Ovary (tissue), 10 donors: ENCODE measurements at regions of chr10 and their contacts with region 1.

Region 1: DNA sequence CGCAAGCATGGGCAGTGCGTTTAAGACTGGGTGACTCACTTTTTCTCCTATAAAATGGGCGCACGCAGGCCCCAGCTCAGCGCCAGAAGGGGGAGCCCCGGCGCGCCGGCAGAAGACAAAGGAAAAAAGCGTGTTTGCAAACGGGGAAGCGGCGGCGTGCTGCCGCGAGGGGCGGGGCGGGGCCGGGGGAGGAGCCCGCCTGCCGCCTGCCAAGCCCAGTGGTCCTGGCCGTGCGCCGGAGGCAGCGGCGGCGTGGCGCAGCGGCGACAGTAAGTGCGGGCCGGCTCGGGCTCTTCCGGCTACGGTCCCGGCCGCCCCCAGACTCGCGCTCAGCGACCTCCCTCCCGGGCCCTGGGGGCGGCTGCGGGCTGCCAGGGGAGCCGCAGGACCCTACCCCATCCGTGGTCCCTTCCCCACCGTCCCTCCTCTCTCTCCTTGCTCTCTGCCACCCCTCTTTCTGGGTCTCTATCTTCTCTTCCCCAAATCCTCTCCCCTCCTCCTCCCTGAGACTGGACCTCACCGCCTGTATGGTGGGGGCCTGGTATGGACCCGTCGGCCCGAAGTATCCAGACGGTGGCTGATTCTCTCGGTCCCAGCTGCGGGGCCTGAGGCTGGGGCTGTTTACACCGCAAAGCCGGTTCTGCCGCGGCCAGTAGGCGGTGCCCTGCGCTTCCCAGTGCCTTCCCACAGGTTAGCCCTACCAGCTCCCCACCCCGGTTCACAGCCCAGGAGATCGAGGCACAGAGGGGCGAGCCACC is at the start of gene SLC29A3:
- DNase-seq: peak; percentile 80 to 88 (median 84)
- H3K4me3 ChIP-seq: peak within 1 kb of the TSS; percentile 76
- H3K27ac ChIP-seq: peak within 1 kb of the TSS; percentile 83 to 91
- H3K4me1 ChIP-seq: peaks cover 10% of the 10 kb centered on the region
- H3K27me3 ChIP-seq: no peaks in the 10 kb centered on the region
- CTCF ChIP-seq: peak; percentile 52 to 84 (median 73)
- EP300 ChIP-seq: no peak
- POLR2A ChIP-seq: peak; percentile 74
- total RNA-seq, gene SLC29A3: 10.1 to 18.3 (median 15.5) TPM

Region 2: GRCh38 chr10:71371750-71372166 is 52.5 kb after region 1 on chr10:
- intact Hi-C with region 1: loop called in 2 of 4 experiments (anchors 2 to 10 kb)
- DNase-seq: no peak
- H3K4me3 ChIP-seq: no peak overlapping the region
- H3K27ac ChIP-seq: no peak overlapping the region
- H3K4me1 ChIP-seq: peaks cover under 1% of the 10 kb centered on the region
- H3K27me3 ChIP-seq: no peaks in the 10 kb centered on the region
- CTCF ChIP-seq: no peak
- EP300 ChIP-seq: no peak
- POLR2A ChIP-seq: no peak

Region 3: DNA sequence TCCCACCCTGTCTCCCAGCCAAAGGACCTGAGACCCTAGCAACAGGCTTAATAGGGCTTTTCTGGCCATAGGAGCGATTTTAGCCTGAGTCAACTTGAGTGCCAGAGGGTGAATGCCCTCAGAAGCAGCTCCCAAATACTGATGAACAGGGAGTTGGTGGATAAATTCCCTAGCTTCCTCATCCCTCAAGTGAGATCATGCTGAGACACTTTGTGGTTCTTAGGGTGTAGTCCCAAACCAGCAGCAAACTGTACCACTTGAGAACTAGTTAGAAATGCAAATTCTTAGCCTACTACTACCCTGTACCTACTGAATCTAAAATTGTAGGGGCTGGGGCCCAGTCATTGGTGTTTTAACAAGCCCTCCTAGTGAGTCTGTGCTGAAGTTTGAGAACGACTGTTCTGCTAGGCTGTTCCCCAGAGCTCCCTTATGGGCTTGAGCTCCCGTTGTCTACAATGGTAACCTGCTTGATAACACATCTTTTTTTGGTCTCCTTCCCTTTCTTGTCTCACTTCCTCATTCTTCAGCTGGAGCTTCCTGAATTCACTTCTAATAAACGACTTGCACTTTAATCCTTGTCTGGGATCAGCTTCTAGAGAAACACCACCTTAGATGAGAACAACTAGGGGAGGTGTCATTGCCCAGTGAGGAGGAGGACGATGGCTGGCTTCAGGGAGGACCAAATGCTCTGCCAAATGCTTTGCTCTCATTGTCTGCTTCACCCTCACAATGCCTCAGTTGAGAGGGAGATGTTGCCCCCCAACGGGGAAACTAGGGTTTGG is 59.3 kb after region 1 on chr10:
- intact Hi-C with region 1: loop called in 2 of 4 experiments (anchors 2 to 10 kb)
- DNase-seq: no peak
- H3K4me3 ChIP-seq: no peak overlapping the region
- H3K27ac ChIP-seq: peak overlapping the region in 1 of 2 donors; percentile 93
- H3K4me1 ChIP-seq: peaks cover 4% of the 10 kb centered on the region
- H3K27me3 ChIP-seq: no peaks in the 10 kb centered on the region
- CTCF ChIP-seq: no peak
- EP300 ChIP-seq: no peak
- POLR2A ChIP-seq: no peak

Region 4: DNA sequence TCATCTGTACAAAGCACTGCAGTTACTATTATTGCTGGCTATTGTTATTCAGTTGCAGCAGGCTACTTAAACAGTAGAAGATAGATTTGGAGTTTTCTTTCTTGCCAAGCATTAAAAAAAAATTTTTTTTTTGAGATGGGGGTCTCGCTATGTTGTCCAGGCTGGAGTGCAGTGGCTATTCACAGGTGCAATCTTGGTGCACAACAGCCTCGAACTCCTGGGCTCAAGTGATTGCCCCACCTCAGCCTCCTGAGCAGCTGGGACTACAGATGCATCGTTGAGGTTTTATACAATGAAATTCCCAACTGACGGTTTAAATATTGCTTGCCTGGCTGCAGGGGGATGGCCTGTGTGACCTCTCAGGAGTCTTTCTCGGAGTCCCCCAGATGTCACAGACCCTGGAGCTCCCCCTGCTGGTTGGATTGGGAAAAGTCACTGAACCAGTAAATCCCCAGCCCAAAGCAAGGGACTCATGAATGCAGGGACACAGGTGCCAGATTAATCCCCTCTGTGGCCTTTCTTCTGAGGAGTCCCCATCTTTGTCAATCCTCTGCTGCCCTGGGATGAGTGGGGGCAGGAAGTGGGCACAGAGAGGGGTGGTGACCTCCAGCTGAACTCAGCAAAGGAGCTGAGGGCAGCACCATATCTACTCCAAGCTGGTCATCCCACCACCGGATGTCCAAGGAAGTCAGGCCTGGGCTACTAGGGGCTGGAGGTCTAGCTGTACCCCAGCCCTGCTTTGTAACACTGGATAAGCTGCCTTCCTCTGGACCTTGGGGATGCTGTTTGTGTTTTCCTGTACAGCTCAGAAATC is 250.8 kb after region 1 on chr10:
- intact Hi-C with region 1: loop called in 3 of 4 experiments (anchors 5 to 10 kb)
- DNase-seq: peak; percentile 76 to 87 (median 80)
- H3K4me3 ChIP-seq: no peak overlapping the region
- H3K27ac ChIP-seq: no peak overlapping the region
- H3K4me1 ChIP-seq: no peaks in the 10 kb centered on the region
- H3K27me3 ChIP-seq: no peaks in the 10 kb centered on the region
- CTCF ChIP-seq: peak; percentile 85 to 95 (median 90)
- EP300 ChIP-seq: no peak
- POLR2A ChIP-seq: no peak

Region 5: DNA sequence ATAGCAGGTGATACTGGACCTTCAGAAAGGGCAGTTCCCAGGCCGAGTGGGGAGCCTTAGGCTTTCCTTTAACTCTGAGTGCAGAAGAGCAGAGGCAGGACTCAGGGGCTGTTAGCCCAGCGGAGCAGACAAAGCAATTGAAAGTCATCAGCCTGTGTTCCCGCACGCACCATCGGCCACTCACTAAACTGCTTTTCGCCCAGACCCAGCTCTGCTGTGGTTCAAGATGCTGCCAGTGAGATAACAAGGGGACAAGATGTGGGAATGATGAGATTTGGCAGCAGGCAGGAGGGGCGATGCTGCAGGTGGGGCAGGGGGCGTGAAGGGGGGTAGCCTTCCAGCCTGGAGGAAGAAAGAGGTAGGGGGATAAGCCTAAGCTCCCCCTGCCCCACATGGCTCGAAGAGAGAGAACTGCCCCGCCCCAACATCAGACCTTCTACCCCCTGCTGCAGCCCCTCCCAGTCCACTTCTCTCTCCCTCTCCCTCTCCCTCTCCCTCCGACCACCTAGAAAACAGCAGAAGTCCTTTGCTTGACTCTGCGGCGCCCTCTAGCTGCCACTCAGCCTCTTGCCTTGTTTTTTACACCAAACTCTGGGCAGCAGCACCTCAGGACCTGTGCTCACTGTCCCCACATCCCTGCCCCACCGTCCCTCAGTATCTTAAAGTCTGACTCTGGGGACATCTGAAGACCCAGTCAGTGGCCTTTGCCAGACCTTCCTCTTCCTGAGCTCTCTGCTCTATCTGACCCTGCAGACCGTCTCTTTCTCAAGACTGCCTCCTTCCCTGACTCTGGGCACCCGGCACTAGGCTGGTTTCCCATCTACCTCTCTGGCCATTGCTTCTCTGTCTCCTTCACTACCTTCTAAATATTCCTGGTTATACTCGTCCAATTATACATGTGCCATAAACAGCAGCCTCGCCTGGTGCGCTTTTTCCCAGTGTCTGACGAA is 289.9 kb after region 1 on chr10:
- intact Hi-C with region 1: loop called in 3 of 4 experiments (anchors 5 to 10 kb)
- DNase-seq: peak; percentile 84 to 92 (median 91)
- H3K4me3 ChIP-seq: no peak overlapping the region
- H3K27ac ChIP-seq: no peak overlapping the region
- H3K4me1 ChIP-seq: no peaks in the 10 kb centered on the region
- H3K27me3 ChIP-seq: no peaks in the 10 kb centered on the region
- CTCF ChIP-seq: peak; percentile 65 to 74 (median 70)
- EP300 ChIP-seq: no peak
- POLR2A ChIP-seq: no peak

Region 6: GRCh38 chr10:71708301-71708703 is 389.1 kb after region 1 on chr10:
- intact Hi-C with region 1: loop called in 2 of 4 experiments (anchors 5 to 10 kb)
- DNase-seq: peak; percentile 48 to 83 (median 74)
- H3K4me3 ChIP-seq: no peak overlapping the region
- H3K27ac ChIP-seq: no peak overlapping the region
- H3K4me1 ChIP-seq: peaks cover 6% of the 10 kb centered on the region
- H3K27me3 ChIP-seq: no peaks in the 10 kb centered on the region
- CTCF ChIP-seq: peak; percentile 65 to 87 (median 67)
- EP300 ChIP-seq: no peak
- POLR2A ChIP-seq: no peak

Region 7: DNA sequence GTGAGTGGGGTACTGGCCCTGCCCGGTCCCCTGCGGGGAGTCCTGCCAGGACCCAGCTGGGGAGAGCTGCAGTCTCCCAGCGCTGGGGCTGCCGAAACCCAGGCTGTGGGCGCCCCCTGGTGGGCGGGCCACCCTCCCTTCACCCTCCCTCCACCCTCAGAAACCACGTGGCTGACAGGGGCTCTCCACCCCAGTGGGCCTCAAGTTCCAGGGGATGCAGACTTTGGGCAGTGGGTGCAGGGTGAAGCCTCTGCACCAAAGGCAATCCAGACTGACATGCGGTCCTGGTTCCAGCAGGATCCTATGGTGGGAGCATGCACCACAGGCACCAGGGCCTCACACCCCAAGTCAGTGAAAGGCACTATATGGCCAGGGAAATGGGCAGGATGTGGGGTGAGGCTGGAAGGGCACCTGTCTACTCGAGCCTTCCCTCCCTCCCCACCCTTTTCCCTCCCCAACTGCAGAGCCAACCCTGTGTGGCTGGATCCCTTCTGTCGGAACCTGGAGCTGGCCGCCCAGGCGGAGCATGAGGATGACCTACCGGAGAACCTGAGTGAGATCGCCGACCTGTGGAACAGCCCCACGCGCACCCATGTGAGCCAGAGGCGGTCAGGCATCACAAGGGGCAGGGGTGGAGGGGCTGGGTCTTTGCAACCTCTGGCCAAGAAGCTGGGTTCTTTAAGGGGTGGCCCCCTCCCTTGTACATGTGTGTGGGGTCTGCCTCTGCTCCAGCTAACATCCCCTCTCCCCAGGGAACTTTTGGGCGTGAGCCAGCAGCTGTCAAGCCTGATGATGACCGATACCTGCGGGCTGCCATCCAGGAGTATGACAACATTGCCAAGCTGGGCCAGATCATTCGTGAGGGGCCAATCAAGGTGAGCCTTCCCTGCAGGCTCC is 493.0 kb after region 1 on chr10:
- intact Hi-C with region 1: loop called in 2 of 4 experiments (anchors 10 kb)
- DNase-seq: peak; percentile 64 to 83 (median 76)
- H3K4me3 ChIP-seq: no peak overlapping the region
- H3K27ac ChIP-seq: no peak overlapping the region
- H3K4me1 ChIP-seq: no peaks in the 10 kb centered on the region
- H3K27me3 ChIP-seq: no peaks in the 10 kb centered on the region
- CTCF ChIP-seq: peak; percentile 31 to 80 (median 66)
- EP300 ChIP-seq: no peak
- POLR2A ChIP-seq: peak; percentile 16